ENCODE measurements at regions of chr1 and their contacts with region 1.

Region 1: GRCh38 chr1:172398970-172399755 is 21.3 kb upstream of the C1orf105 start:
- DNase-seq: peak; percentile 40
- H3K4me3 ChIP-seq: no peak overlapping the region
- H3K27ac ChIP-seq: peak overlapping the region; percentile 41
- H3K4me1 ChIP-seq: no peaks in the 10 kb centered on the region
- H3K27me3 ChIP-seq: no peaks in the 10 kb centered on the region
- CTCF ChIP-seq: peak; percentile 53

Region 2: GRCh38 chr1:172002725-172003345 is 396.3 kb before region 1 on chr1:
- intact Hi-C with region 1: loop called (anchors 10 kb)
- DNase-seq: peak; percentile 33
- H3K4me3 ChIP-seq: no peak overlapping the region
- H3K27ac ChIP-seq: no peak overlapping the region
- H3K4me1 ChIP-seq: no peaks in the 10 kb centered on the region
- H3K27me3 ChIP-seq: no peaks in the 10 kb centered on the region
- CTCF ChIP-seq: peak; percentile 58

Region 3: GRCh38 chr1:172089768-172090510 is 309.2 kb before region 1 on chr1:
- intact Hi-C with region 1: loop called (anchors 2 kb)
- DNase-seq: peak; percentile 70
- H3K4me3 ChIP-seq: peak overlapping the region; percentile 9
- H3K27ac ChIP-seq: no peak overlapping the region
- H3K4me1 ChIP-seq: no peaks in the 10 kb centered on the region
- H3K27me3 ChIP-seq: no peaks in the 10 kb centered on the region
- CTCF ChIP-seq: peak; percentile 93

Region 4: DNA sequence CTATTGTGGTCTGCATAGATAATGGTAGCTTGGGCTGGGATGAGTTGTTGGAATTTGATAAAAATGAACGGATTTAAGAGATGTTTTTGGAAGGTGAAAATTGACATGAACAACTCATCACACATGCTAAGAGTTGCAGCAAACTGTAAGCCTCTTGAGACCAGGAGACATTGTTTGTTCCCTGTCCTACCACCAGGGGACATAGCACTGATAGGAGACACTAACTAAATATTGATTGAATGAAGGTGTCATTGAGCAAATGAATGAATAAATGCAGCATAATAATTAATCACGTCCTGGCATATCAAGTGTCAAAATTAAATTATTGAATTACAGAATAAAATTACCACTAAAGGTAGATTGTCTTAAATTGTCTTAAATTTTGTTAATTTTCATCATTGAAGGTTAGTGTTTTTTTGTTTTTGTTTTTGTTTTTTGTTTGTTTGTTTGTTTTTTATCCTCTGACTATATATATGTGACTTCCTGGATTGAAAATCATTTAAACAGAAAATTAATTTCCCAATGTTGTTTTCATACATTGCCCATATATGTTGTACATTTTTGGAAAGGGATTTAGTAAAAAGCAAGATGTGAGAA is 264.0 kb before region 1 on chr1:
- intact Hi-C with region 1: loop called (anchors 5 kb)
- DNase-seq: no peak
- H3K4me3 ChIP-seq: no peak overlapping the region
- H3K27ac ChIP-seq: no peak overlapping the region
- H3K4me1 ChIP-seq: no peaks in the 10 kb centered on the region
- H3K27me3 ChIP-seq: no peaks in the 10 kb centered on the region
- CTCF ChIP-seq: peak; percentile 48

Region 5: GRCh38 chr1:172686143-172686542 is 287.0 kb after region 1 on chr1:
- intact Hi-C with region 1: no loop called
- DNase-seq: no peak
- H3K4me3 ChIP-seq: no peak overlapping the region
- H3K27ac ChIP-seq: no peak overlapping the region
- H3K4me1 ChIP-seq: no peaks in the 10 kb centered on the region
- H3K27me3 ChIP-seq: no peaks in the 10 kb centered on the region
- CTCF ChIP-seq: no peak

Measured in colonic mucosa (tissue), 4 donors.